ENCODE measurements at regions of chr11 and their contacts with region 1.

Region 1: DNA sequence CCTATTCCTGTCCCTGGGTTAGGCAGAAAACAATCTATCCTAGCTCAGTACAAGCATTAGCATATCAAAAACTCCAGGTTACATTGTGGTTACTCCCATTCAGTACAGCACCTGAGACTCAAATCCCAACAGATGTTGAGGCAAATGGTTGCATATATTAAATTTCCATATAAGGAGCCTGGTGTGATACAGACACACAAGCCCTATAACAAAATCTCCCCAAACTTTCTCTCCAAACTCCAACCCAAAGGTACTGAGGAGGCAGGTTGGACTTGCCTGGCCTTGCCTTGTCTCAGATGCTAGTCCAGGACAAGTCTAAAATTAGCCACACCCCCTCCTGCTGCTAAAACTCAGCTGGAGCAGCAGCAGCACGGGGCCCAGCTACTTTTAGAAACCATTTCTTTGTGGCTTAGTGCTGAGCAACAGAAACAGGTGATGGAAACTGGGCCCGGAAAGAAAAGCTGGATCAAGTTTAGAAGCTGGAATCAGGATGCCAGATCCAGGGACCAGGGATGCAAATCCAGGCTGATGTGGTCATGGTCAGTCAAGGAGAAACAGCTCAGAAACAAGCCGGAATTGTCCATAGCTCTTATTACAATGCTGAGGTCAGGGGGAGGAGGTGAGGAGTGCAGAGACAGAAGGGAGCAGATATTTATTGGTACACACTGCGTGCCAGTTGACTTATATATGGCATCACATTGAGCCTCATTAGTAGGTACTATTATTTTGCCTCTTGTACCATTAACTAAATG is 73.7 kb upstream of the AMOTL1 start:
- DNase-seq: no peak
- ATAC-seq: no peak
- H3K4me3 ChIP-seq: no peak overlapping the region
- H3K27ac ChIP-seq: no peak overlapping the region
- H3K4me1 ChIP-seq: no peaks in the 10 kb centered on the region
- H3K27me3 ChIP-seq: no peaks in the 10 kb centered on the region
- CTCF ChIP-seq: no peak
- EP300 ChIP-seq: no peak
- POLR2A ChIP-seq: no peak
- RAD21 ChIP-seq: no peak

Region 2: DNA sequence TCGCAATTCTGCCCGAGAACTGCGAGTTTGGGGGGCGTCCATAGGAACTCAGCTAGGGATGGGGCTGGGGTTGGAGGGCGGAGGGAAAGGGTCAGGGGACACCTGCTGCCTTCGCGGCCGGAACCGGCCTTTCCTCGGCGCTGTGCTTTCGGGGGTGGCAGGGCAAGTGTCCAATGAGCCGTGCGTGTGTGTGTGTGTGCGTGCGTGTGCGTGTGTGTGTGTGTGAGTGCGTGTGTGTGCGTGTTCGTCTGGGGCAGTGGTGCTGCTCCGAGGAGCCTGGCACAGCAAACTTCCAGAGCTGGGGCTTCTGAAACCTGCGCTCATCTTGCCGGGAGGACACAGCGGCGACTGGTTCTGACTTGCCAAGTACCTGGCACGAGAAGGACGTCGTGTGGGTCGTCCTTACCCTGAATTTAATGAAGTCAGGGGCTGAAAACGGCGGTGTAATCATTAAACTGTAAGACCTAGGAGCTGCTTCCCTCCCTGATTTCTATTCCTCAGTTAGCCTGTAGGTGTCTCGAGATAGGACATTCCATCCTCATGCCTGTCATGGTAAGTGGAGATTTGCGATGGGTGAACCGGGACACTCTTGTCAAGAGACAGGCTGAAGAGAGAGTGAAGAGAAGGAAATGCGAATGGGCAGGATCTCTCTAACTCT is 46.7 kb after region 1 on chr11:
- CTCF ChIA-PET with region 1: no interaction called
- POLR2A ChIA-PET with region 1: no interaction called
- RAD21 ChIA-PET with region 1: no interaction called
- SMC1A ChIA-PET with region 1: no interaction called
- in situ Hi-C with region 1: no loop called
- intact Hi-C with region 1: no loop called
- DNase-seq: no peak
- ATAC-seq: peak; percentile 61
- H3K4me3 ChIP-seq: no peak overlapping the region
- H3K27ac ChIP-seq: no peak overlapping the region
- H3K4me1 ChIP-seq: no peaks in the 10 kb centered on the region
- H3K27me3 ChIP-seq: peaks cover 8 to 12% of the 10 kb centered on the region in 2 experiments
- CTCF ChIP-seq: 0 out of 6 replicates have a peak, but pooled peaks of 2 of the 3 experiments have one; percentile 11 to 16
- EP300 ChIP-seq: no peak
- POLR2A ChIP-seq: no peak
- RAD21 ChIP-seq: no peak

Region 3: GRCh38 chr11:95119374-95120060 is 425.0 kb after region 1 on chr11:
- CTCF ChIA-PET with region 1: no interaction called
- POLR2A ChIA-PET with region 1: no interaction called
- RAD21 ChIA-PET with region 1: no interaction called
- SMC1A ChIA-PET with region 1: no interaction called
- in situ Hi-C with region 1: no loop called
- intact Hi-C with region 1: loop called (anchors 5 kb)
- DNase-seq: no peak
- ATAC-seq: no peak; the same call in 2 of the 3 replicates
- H3K4me3 ChIP-seq: no peak overlapping the region
- H3K27ac ChIP-seq: no peak overlapping the region
- H3K4me1 ChIP-seq: no peaks in the 10 kb centered on the region
- H3K27me3 ChIP-seq: no peaks in the 10 kb centered on the region
- CTCF ChIP-seq: no peak
- EP300 ChIP-seq: no peak
- POLR2A ChIP-seq: no peak
- RAD21 ChIP-seq: no peak